Naive thymus-derived CD4-positive, alpha-beta T cell (primary cell): ENCODE measurements at regions of chr7 and their contacts with region 1.

Region 1: GRCh38 chr7:122886357-122887081 is at the start of gene CADPS2:
- DNase-seq: peak in 1 of 9 donors; percentile 34
- ATAC-seq: no peak
- H3K4me3 ChIP-seq: no peak within 1 kb of the TSS
- H3K4me3 Mint-ChIP-seq: peak within 1 kb of the TSS; percentile 6 to 68 (median 54)
- H3K27ac ChIP-seq: no peak within 1 kb of the TSS
- H3K27ac Mint-ChIP-seq: no peak within 1 kb of the TSS
- H3K4me1 ChIP-seq: no peaks in the 10 kb centered on the region
- H3K4me1 Mint-ChIP-seq: peaks cover 0 to 14% (median 10%) of the 10 kb centered on the region in 7 donors
- H3K27me3 ChIP-seq: no peaks in the 10 kb centered on the region
- H3K27me3 Mint-ChIP-seq: peaks cover 59 to 72% (median 63%) of the 10 kb centered on the region in 5 donors
- total RNA-seq, gene CADPS2: not detected

Region 2: DNA sequence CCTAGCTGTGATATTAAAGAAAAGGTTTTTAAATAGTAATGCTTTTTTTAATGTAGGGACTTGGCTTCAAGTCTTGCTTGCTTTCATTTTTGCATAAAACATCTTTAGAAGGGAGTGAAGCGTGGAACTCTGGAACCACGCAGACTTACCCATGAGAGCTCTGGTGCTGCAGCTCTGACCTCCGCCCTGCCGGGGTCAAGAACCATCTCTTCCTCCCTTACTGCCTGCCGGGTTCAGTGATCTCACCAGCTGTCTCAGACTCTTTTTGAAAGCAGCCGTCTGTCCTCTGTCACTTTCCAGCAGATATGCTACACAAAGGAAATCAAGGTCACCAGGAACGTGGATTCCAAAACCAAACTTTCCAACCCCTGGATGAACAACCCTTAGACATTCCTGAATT is 1525.3 kb after region 1 on chr7:
- CTCF ChIA-PET with region 1: no interaction called
- POLR2A ChIA-PET with region 1: no interaction called
- intact Hi-C with region 1: loop called in 1 of 2 experiments (anchors 5 kb)
- DNase-seq: no peak
- ATAC-seq: no peak
- H3K4me3 ChIP-seq: no peak overlapping the region
- H3K4me3 Mint-ChIP-seq: no peak overlapping the region
- H3K27ac ChIP-seq: no peak overlapping the region
- H3K27ac Mint-ChIP-seq: no peak overlapping the region
- H3K4me1 ChIP-seq: no peaks in the 10 kb centered on the region
- H3K4me1 Mint-ChIP-seq: no peaks in the 10 kb centered on the region
- H3K27me3 ChIP-seq: no peaks in the 10 kb centered on the region
- H3K27me3 Mint-ChIP-seq: no peaks in the 10 kb centered on the region